HCT116 (cell line): ENCODE measurements at regions of chr11 and their contacts with region 1.

Region 1: DNA sequence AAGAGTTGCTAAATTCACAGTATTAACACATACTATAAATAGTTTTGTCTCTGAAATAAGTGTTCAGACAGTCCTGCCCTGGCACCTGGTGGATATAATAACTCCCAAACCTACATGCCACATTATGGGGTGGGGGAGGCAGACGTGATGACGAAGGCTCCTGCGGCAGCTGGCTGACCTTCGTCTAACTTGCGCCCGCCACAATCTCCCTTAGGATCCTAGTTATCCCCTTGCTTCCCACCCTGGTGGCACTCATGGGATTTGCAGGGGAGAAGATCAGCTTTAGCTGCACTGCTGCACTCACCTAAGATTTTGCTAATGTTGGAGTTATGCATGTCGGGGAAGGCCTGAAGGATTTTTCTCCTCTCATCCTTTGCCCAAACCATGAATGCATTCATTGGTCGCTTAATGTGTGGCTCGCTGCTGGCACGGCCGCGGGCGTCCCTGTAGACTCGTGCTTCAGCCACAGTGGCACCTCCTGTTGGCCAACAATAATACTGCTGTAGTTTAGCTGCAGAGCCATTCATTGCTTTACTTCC is 367.6 kb downstream of the SOX6 start:
- DNase-seq: peak; percentile 19
- ATAC-seq: peak; percentile 93
- H3K4me3 ChIP-seq: 0 out of 4 replicates have a peak overlapping the region, but pooled peaks of 1 of the 2 experiments have one; percentile 7
- H3K27ac ChIP-seq: no peak overlapping the region
- H3K4me1 ChIP-seq: 0 out of 4 replicates have a peak, but pooled peaks cover 0 to 4% of the 10 kb centered on the region in 2 experiments
- H3K27me3 ChIP-seq: peaks cover 4% of the 10 kb centered on the region; the same call in 1 of the 2 replicates
- CTCF ChIP-seq: peak; percentile 43 to 70 (median 53); a peak in 5 of 6 replicates
- POLR2A ChIP-seq: no peak
- RAD21 ChIP-seq: peak; percentile 21; the same call in 1 of the 2 replicates

Region 2: DNA sequence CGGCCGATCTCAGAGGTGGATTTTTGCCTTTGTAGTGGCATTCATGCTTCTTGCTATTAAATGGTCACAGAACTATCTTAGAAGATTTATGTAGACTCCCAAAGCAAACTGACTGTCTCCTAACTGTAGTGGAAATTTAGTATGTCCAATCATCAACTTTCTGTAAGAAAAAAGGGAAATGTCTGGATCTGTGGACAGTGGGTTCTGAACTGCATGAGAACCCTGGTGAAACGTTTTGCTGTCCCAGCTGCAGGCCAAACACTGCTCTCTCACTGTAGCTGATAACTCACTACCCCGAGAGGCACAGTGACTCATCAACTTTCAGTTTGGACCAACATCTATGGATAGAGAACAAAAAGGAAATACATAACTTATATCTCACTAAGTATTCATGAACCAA is 19.5 kb before region 1 on chr11:
- CTCF ChIA-PET with region 1: interaction called, 11 read pairs
- POLR2A ChIA-PET with region 1: no interaction called
- RAD21 ChIA-PET with region 1: no interaction called
- intact Hi-C with region 1: no loop called
- DNase-seq: no peak
- ATAC-seq: no peak
- H3K4me3 ChIP-seq: no peak overlapping the region
- H3K27ac ChIP-seq: no peak overlapping the region
- H3K4me1 ChIP-seq: peaks cover 2 to 6% of the 10 kb centered on the region in 2 experiments; a peak in 2 of 4 replicates
- H3K27me3 ChIP-seq: no peaks in the 10 kb centered on the region
- CTCF ChIP-seq: no peak
- POLR2A ChIP-seq: no peak
- RAD21 ChIP-seq: no peak